Heart right ventricle (tissue), 16 donors: ENCODE measurements at regions of chr4 and their contacts with region 1.

Region 1: GRCh38 chr4:140861359-140862176 is 105.4 kb upstream of the TBC1D9 start:
- DNase-seq: peak in 1 of 2 donors; percentile 80
- ATAC-seq: peak; percentile 33 to 80 (median 66)
- H3K4me3 ChIP-seq: no peak overlapping the region
- H3K27ac ChIP-seq: peak overlapping the region in 3 of 10 donors; percentile 41 to 60 (median 57)
- H3K4me1 ChIP-seq: peaks cover 0 to 35% (median 6%) of the 10 kb centered on the region in 9 donors
- H3K27me3 ChIP-seq: no peaks in the 10 kb centered on the region
- CTCF ChIP-seq: peak; percentile 57 to 92 (median 78)

Region 2: DNA sequence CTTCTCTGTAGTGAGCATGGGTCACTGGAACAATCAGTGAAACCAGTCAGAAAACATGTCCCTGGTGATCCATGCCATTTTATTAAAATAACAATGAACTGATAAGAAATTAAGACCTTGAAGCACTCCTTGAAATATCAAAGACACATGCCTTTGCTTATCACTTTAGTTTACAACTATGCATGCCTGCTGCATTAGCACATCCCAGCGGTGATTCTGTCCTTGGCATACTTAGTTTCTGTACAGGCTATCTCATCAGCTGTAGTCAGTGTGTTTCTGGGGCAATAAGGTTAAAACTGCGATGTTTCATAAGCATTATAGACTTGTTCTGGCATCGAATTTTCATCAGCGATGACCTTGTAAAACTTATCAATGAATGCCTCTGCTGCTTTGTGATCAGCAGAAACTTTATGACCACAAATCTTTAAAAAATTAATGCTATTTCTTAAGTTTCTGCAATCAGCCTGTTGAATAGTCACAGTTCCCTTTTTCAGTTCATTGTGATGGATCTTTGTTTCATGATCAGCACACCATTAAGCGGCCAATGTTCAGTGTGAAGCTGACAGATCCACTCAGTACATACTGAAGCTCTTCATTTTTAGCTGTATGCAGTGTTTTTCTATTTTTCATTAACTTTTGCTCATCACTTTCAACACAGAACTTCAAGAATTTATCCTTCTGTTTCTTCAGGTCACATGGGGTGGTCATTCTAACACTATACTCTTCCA is 121.2 kb after region 1 on chr4:
- intact Hi-C with region 1: loop called in 2 of 10 experiments (anchors 5 to 10 kb)
- DNase-seq: no peak
- ATAC-seq: peak in 7 of 8 donors; percentile 39 to 88 (median 79)
- H3K4me3 ChIP-seq: no peak overlapping the region
- H3K27ac ChIP-seq: peak overlapping the region in 6 of 10 donors; percentile 1 to 77 (median 56)
- H3K4me1 ChIP-seq: peaks cover 0 to 59% (median 12%) of the 10 kb centered on the region in 9 donors
- H3K27me3 ChIP-seq: no peaks in the 10 kb centered on the region
- CTCF ChIP-seq: peak in 1 of 9 donors; percentile 4

Region 3: DNA sequence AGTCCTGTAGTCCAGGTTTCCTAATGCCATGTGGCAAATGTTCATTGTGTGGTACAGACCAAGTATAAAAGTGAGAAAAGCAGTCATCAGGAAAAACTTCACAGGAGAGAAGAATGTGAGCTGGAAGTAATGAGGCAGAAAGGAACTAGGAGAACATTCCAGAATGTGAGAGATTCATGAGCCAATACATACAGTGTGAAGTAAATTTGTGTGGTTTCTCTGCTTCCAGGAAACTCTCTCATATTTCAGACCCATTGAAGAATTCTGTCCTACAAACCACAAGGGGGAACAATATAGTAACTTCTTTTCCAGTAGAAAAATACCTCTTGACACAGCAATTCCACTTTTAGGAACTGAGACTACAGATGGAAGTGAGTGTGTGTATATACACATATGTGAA is 135.2 kb after region 1 on chr4:
- intact Hi-C with region 1: loop called in 3 of 10 experiments (anchors 10 kb)
- DNase-seq: no peak
- ATAC-seq: no peak
- H3K4me3 ChIP-seq: no peak overlapping the region
- H3K27ac ChIP-seq: peak overlapping the region in 3 of 10 donors; percentile 13 to 65 (median 31)
- H3K4me1 ChIP-seq: peaks cover 2 to 62% (median 16%) of the 10 kb centered on the region in 9 donors
- H3K27me3 ChIP-seq: no peaks in the 10 kb centered on the region
- CTCF ChIP-seq: peak in 1 of 9 donors; percentile 36

Region 4: GRCh38 chr4:141133146-141133998 is 271.8 kb after region 1 on chr4 and contains the start of gene RNF150:
- intact Hi-C with region 1: loop called (anchors 1 to 5 kb)
- DNase-seq: peak; percentile 71 to 84
- ATAC-seq: peak; percentile 82 to 91 (median 86)
- H3K4me3 ChIP-seq: peak within 1 kb of the TSS; percentile 64 to 93 (median 88)
- H3K27ac ChIP-seq: peak within 1 kb of the TSS; percentile 68 to 95 (median 90)
- H3K4me1 ChIP-seq: peaks cover 4 to 24% (median 12%) of the 10 kb centered on the region in 9 donors
- H3K27me3 ChIP-seq: peaks cover 0 to 63% (median 6%) of the 10 kb centered on the region in 7 donors
- CTCF ChIP-seq: peak; percentile 42 to 79 (median 64)
- total RNA-seq, gene RNF150: 59.7 to 131 (median 99.7) TPM

Region 5: GRCh38 chr4:141220655-141221605 is 359.4 kb after region 1 on chr4 and contains the start of gene ZNF330:
- intact Hi-C with region 1: loop called in 4 of 10 experiments (anchors 10 kb)
- DNase-seq: peak; percentile 94 to 96
- ATAC-seq: peak; percentile 97 to 99 (median 98)
- H3K4me3 ChIP-seq: peak within 1 kb of the TSS; percentile 66 to 99 (median 90)
- H3K27ac ChIP-seq: peak within 1 kb of the TSS; percentile 91 to 99 (median 97)
- H3K4me1 ChIP-seq: peaks cover 0 to 63% (median 25%) of the 10 kb centered on the region in 9 donors
- H3K27me3 ChIP-seq: no peaks in the 10 kb centered on the region
- CTCF ChIP-seq: peak in 6 of 9 donors; percentile 3 to 48 (median 32)
- total RNA-seq, gene ZNF330: 99.3 to 201 (median 148) TPM